GM12878 (cell line): ENCODE measurements at regions of chr15 and their contacts with region 1.

Region 1: DNA sequence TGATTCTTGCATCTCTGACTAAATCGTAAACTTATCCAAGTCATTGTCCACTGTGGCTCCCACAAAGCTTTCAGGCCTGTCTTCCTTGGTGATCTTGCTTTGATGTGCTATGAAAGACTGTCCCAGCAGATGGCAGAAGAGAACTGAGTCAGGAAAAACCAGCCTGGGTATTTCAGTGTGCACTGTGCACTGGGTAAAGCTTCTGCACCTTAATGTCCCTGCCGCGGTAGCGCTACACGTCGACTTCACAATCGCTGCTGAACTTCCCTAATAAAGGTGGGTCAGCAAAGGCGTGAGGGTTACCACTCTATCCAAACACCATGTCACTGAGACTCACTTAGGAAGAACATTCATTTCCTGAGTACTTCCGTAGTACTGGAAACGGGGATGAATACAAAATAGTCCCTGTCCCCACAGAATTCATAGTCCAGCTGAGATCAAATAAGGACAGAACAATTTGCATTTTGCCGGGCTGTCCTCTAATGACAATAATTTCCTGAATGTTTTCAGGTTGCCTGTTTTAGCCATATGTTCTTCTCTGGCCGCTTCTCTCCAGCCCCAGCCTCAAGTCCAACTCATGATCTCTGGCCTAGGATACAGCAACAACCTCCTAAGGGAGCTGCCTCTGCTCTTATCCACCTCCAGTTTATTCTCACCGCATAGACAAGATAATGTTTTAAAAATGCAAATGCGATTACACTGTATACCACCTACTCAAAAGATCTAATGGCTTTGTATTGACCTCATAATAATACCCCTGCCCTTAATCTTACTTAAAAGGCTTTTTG is 83.6 kb upstream of the AKAP13 start:
- DNase-seq: peak; percentile 68
- ATAC-seq: peak; percentile 98
- H3K4me3 ChIP-seq: no peak overlapping the region
- H3K27ac ChIP-seq: no peak overlapping the region
- H3K4me1 ChIP-seq: no peaks in the 10 kb centered on the region
- H3K27me3 ChIP-seq: no peaks in the 10 kb centered on the region; a peak in 1 of 4 replicates
- CTCF ChIP-seq: peak; percentile 76 to 79 (median 77)
- EP300 ChIP-seq: no peak
- POLR2A ChIP-seq: no peak
- RAD21 ChIP-seq: peak; percentile 97

Region 2: DNA sequence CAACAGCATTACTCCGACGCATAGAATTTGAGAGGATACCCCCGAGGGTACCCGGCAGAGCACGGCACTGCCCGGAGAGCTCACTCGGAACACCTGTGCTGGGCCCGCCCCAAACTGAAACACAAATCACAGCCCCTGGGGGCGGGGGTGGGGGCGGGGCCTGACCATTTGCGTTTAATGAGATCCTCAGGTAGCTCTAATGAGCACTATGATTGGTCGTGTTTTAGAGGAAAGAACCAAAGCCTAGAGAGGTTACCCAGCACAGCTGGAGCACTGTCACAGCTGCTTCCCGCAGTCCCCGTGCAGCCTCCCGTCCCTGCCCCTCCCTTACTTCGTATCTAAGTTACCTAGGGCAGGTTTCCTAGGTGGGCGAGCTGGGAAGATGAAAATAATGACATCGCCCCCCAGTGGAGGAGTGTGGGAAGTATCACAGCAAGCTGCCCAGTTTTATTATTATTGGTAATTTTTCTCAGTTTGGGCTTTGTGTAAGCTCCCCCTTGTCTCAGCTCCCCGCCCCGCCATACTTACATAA is 128.1 kb before region 1 on chr15:
- CTCF ChIA-PET with region 1: no interaction called
- POLR2A ChIA-PET with region 1: no interaction called
- RAD21 ChIA-PET with region 1: no interaction called
- SMC1A ChIA-PET with region 1: no interaction called
- in situ Hi-C with region 1: no loop called
- intact Hi-C with region 1: no loop called
- DNase-seq: no peak
- ATAC-seq: peak; percentile 56
- H3K4me3 ChIP-seq: no peak overlapping the region
- H3K27ac ChIP-seq: no peak overlapping the region
- H3K4me1 ChIP-seq: no peaks in the 10 kb centered on the region
- H3K27me3 ChIP-seq: peaks cover 0 to 4% of the 10 kb centered on the region in 2 experiments; a peak in 1 of 4 replicates
- CTCF ChIP-seq: peak; percentile 27 to 55 (median 36)
- EP300 ChIP-seq: no peak
- POLR2A ChIP-seq: no peak
- RAD21 ChIP-seq: peak; percentile 52

Region 3: GRCh38 chr15:85312486-85312885 is 15.7 kb after region 1 on chr15:
- CTCF ChIA-PET with region 1: interaction called, 23 read pairs
- POLR2A ChIA-PET with region 1: interaction called, 4 read pairs
- RAD21 ChIA-PET with region 1: interaction called, 15 read pairs
- SMC1A ChIA-PET with region 1: interaction called, 18 read pairs
- in situ Hi-C with region 1: no loop called
- intact Hi-C with region 1: no loop called
- DNase-seq: peak; percentile 77
- ATAC-seq: peak; percentile 98
- H3K4me3 ChIP-seq: peak overlapping the region; percentile 39
- H3K27ac ChIP-seq: peak overlapping the region; percentile 84
- H3K4me1 ChIP-seq: peaks cover 36% of the 10 kb centered on the region
- H3K27me3 ChIP-seq: no peaks in the 10 kb centered on the region
- CTCF ChIP-seq: no peak
- EP300 ChIP-seq: peak in 1 of 2 experiments; percentile 41; a peak in 1 of 4 replicates
- POLR2A ChIP-seq: peak; percentile 38; the same call in 1 of the 2 replicates
- RAD21 ChIP-seq: no peak

Region 4: GRCh38 chr15:85504749-85505676 is 208.2 kb after region 1 on chr15:
- CTCF ChIA-PET with region 1: interaction called, 54 read pairs
- POLR2A ChIA-PET with region 1: no interaction called
- RAD21 ChIA-PET with region 1: interaction called, 18 read pairs
- SMC1A ChIA-PET with region 1: interaction called, 28 read pairs
- in situ Hi-C with region 1: no loop called
- intact Hi-C with region 1: loop called (anchors 2 kb)
- DNase-seq: no peak
- ATAC-seq: peak; percentile 86
- H3K4me3 ChIP-seq: no peak overlapping the region
- H3K27ac ChIP-seq: no peak overlapping the region
- H3K4me1 ChIP-seq: peaks cover 18% of the 10 kb centered on the region
- H3K27me3 ChIP-seq: no peaks in the 10 kb centered on the region
- CTCF ChIP-seq: peak; percentile 38 to 59 (median 55); a peak in 5 of 6 replicates
- EP300 ChIP-seq: no peak
- POLR2A ChIP-seq: no peak
- RAD21 ChIP-seq: peak; percentile 63

Region 5: GRCh38 chr15:85582131-85583079 is 285.6 kb after region 1 on chr15:
- CTCF ChIA-PET with region 1: interaction called, 5 read pairs
- POLR2A ChIA-PET with region 1: no interaction called
- RAD21 ChIA-PET with region 1: no interaction called
- SMC1A ChIA-PET with region 1: interaction called, 7 read pairs
- in situ Hi-C with region 1: no loop called
- intact Hi-C with region 1: loop called (anchors 5 kb)
- DNase-seq: peak; percentile 34
- ATAC-seq: peak; percentile 51
- H3K4me3 ChIP-seq: peak overlapping the region; percentile 63
- H3K27ac ChIP-seq: peak overlapping the region; percentile 82
- H3K4me1 ChIP-seq: peaks cover 63% of the 10 kb centered on the region
- H3K27me3 ChIP-seq: no peaks in the 10 kb centered on the region
- CTCF ChIP-seq: no peak
- EP300 ChIP-seq: no peak
- POLR2A ChIP-seq: peak; percentile 81
- RAD21 ChIP-seq: no peak